ENCODE measurements at regions of chr18 and their contacts with region 1.

Region 1: GRCh38 chr18:2083691-2084090 is 487.6 kb downstream of the METTL4 start:
- DNase-seq: peak; percentile 42
- H3K4me3 Mint-ChIP-seq: no peak overlapping the region
- H3K27ac Mint-ChIP-seq: no peak overlapping the region
- H3K4me1 Mint-ChIP-seq: peaks cover 8% of the 10 kb centered on the region
- H3K27me3 Mint-ChIP-seq: no peaks in the 10 kb centered on the region
- CTCF ChIP-seq: peak; percentile 54

Region 2: DNA sequence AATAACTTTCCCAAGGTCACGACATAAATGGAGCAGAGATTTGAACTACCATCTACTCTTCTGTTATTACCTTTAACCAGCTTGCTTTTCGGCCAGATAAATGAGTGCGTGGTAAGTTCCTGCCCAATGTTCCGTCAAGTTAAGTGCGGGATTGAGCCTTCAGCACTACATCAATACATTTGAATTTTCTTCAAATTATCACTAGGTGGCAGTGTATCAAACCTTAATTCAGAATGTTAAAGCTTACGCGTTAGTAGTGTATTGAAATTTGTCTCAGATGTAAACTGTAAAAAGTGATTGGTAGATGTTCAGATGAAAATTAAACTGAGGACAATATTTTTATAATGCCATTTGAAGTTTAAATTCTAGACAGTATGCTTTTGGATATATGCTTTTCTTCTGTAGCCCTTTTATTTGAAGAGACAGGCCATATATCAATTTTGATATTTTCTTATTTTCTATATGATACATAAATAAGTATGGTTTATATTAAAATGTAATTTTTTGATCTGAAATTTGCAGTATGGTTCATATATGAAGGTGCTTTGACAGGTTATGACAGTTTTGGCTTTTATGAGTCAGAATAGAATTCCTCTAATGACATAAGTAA is 497.7 kb before region 1 on chr18:
- CTCF ChIA-PET with region 1: interaction called, 6 read pairs
- POLR2A ChIA-PET with region 1: no interaction called
- intact Hi-C with region 1: loop called (anchors 1 kb)
- DNase-seq: peak; percentile 45
- H3K4me3 Mint-ChIP-seq: no peak overlapping the region
- H3K27ac Mint-ChIP-seq: no peak overlapping the region
- H3K4me1 Mint-ChIP-seq: peaks cover 5% of the 10 kb centered on the region
- H3K27me3 Mint-ChIP-seq: no peaks in the 10 kb centered on the region
- CTCF ChIP-seq: peak; percentile 39

Region 3: GRCh38 chr18:1914490-1914889 is 169.2 kb before region 1 on chr18:
- CTCF ChIA-PET with region 1: interaction called, 3 read pairs
- POLR2A ChIA-PET with region 1: no interaction called
- intact Hi-C with region 1: loop called (anchors 5 kb)
- DNase-seq: peak; percentile 50
- H3K4me3 Mint-ChIP-seq: no peak overlapping the region
- H3K27ac Mint-ChIP-seq: no peak overlapping the region
- H3K4me1 Mint-ChIP-seq: peaks cover 11% of the 10 kb centered on the region
- H3K27me3 Mint-ChIP-seq: no peaks in the 10 kb centered on the region
- CTCF ChIP-seq: peak; percentile 60

Region 4: DNA sequence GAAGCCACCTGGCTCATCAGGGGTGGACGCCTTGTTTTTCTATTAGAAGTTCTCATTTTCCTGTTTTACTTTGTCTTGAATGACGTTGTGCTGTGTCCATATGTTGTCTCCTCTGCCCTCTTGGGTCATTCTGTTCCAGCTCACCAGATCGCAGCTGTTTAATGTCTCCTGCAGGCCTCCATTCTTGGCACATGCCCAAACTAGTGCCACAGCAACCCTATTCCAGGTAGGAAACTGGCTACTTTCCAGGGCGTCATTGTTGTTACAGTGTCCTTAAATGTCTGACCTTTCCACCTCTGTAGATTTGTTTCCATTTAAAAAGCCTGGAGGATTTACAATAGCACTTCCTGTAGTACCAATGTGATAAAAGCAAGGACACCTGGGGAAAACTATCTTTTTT is 13.1 kb before region 1 on chr18:
- CTCF ChIA-PET with region 1: interaction called, 11 read pairs
- POLR2A ChIA-PET with region 1: no interaction called
- intact Hi-C with region 1: no loop called
- DNase-seq: peak; percentile 20
- H3K4me3 Mint-ChIP-seq: no peak overlapping the region
- H3K27ac Mint-ChIP-seq: no peak overlapping the region
- H3K4me1 Mint-ChIP-seq: no peaks in the 10 kb centered on the region
- H3K27me3 Mint-ChIP-seq: no peaks in the 10 kb centered on the region
- CTCF ChIP-seq: no peak

Region 5: GRCh38 chr18:2096554-2096953 is 12.9 kb after region 1 on chr18:
- CTCF ChIA-PET with region 1: interaction called, 14 read pairs
- POLR2A ChIA-PET with region 1: no interaction called
- intact Hi-C with region 1: no loop called
- DNase-seq: no peak
- H3K4me3 Mint-ChIP-seq: no peak overlapping the region
- H3K27ac Mint-ChIP-seq: no peak overlapping the region
- H3K4me1 Mint-ChIP-seq: peaks cover 9% of the 10 kb centered on the region
- H3K27me3 Mint-ChIP-seq: no peaks in the 10 kb centered on the region
- CTCF ChIP-seq: no peak

Region 6: DNA sequence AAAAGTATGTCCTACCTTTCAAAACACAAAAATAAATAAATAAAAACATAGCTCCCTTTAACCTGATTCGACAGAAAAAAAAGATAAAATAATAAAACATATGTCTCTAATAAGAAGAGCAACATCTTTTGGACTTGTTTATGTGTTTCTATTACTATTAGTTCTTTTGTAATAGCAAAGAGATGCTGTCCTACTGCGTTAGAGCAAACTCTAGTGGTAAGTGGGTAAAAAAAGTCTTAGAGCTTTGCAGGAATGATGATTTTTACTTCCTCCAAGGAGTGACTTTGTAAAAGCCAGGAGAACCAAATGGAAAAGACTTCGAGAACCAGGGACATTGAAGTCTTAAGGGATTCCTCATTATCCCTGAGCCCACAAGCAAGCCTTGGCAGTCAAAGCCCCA is 37.5 kb after region 1 on chr18:
- CTCF ChIA-PET with region 1: no interaction called
- POLR2A ChIA-PET with region 1: no interaction called
- intact Hi-C with region 1: no loop called
- DNase-seq: no peak
- H3K4me3 Mint-ChIP-seq: no peak overlapping the region
- H3K27ac Mint-ChIP-seq: no peak overlapping the region
- H3K4me1 Mint-ChIP-seq: no peaks in the 10 kb centered on the region
- H3K27me3 Mint-ChIP-seq: no peaks in the 10 kb centered on the region
- CTCF ChIP-seq: no peak

Region 7: DNA sequence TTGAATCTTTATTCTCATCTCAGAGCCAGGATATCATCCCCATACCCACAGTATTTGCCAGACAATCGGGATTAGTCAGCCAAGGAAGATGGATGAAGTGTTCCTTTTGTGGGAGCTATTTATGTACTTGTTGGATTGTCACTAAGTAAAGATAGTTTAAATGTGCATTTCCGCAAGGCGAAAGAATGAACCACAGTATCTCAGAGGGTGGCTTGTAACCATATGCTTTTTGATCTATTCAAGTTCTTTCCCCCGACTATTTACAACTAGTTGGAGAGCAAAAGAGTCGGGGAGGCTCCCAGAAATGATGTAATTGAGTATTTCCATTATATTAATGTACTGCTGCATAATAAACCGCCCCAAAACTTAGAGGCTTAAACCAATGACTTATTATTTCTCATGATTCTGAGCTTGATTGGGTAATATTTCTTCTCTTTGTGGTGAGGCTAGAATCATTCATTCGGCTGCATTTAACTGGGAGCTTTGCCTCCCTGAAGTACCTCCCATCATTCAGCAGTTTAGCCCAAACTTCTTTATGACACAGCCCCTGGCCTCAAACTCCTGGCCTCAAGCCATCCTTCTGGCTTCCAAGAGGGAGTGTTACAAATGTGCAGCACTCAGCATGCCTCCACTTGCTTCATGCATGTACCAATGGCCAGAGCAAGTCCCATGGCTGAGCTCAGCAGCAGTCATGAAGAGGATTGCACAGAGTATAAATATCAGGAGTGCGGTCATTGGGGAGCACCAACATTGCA is 64.0 kb after region 1 on chr18:
- CTCF ChIA-PET with region 1: no interaction called
- POLR2A ChIA-PET with region 1: no interaction called
- intact Hi-C with region 1: no loop called
- DNase-seq: peak; percentile 95
- H3K4me3 Mint-ChIP-seq: peak overlapping the region; percentile 58
- H3K27ac Mint-ChIP-seq: peak overlapping the region; percentile 47
- H3K4me1 Mint-ChIP-seq: peaks cover 40% of the 10 kb centered on the region
- H3K27me3 Mint-ChIP-seq: no peaks in the 10 kb centered on the region
- CTCF ChIP-seq: no peak

Measured in MCF 10A (cell line).